ENCODE measurements at regions of chr12 and their contacts with region 1.

Region 1: GRCh38 chr12:55659486-55660385 is 23.0 kb downstream of the OR10P1 start:
- DNase-seq: peak in 2 of 9 experiments; percentile 28 to 45
- ATAC-seq: no peak
- H3K4me3 ChIP-seq: no peak overlapping the region
- H3K4me3 Mint-ChIP-seq: no peak overlapping the region
- H3K27ac ChIP-seq: no peak overlapping the region
- H3K27ac Mint-ChIP-seq: no peak overlapping the region
- H3K4me1 ChIP-seq: no peaks in the 10 kb centered on the region
- H3K4me1 Mint-ChIP-seq: no peaks in the 10 kb centered on the region
- H3K27me3 ChIP-seq: no peaks in the 10 kb centered on the region
- H3K27me3 Mint-ChIP-seq: no peaks in the 10 kb centered on the region
- CTCF ChIP-seq: no peak

Region 2: DNA sequence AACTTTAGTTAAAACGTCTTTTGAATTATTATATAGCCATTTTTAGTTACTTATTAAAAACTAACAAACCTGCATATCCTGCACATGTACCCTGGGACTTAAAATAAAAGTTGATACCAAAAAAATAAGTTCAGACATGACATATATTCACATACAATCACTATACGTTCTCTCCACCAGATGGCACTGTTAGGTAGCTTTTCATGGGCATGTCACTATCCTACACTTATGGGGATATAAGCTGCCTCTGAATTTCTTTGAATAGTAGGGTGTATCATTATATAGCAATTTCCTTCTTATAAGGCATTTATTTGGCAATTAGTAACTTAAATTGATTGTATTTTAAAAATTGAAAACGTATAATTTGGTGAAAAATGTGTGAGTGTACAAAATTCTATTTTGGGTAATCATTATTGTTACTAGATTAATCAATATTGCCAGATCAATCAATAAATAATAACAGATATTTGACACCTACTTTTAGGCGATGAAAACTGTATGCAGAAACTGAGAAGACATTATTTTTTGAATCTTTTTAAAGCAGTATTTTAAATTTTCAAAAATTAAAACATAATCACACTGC is 470.7 kb before region 1 on chr12:
- CTCF ChIA-PET with region 1: interaction called, 12 read pairs
- POLR2A ChIA-PET with region 1: no interaction called
- intact Hi-C with region 1: loop called in 1 of 2 experiments (anchors 1 kb)
- DNase-seq: peak in 5 of 9 experiments; percentile 16 to 79 (median 44)
- ATAC-seq: peak; percentile 73
- H3K4me3 ChIP-seq: no peak overlapping the region
- H3K4me3 Mint-ChIP-seq: no peak overlapping the region
- H3K27ac ChIP-seq: no peak overlapping the region
- H3K27ac Mint-ChIP-seq: no peak overlapping the region
- H3K4me1 ChIP-seq: no peaks in the 10 kb centered on the region
- H3K4me1 Mint-ChIP-seq: no peaks in the 10 kb centered on the region
- H3K27me3 ChIP-seq: peaks cover 3% of the 10 kb centered on the region in 2 experiments
- H3K27me3 Mint-ChIP-seq: peaks cover 35% of the 10 kb centered on the region
- CTCF ChIP-seq: peak; percentile 93

Region 3: DNA sequence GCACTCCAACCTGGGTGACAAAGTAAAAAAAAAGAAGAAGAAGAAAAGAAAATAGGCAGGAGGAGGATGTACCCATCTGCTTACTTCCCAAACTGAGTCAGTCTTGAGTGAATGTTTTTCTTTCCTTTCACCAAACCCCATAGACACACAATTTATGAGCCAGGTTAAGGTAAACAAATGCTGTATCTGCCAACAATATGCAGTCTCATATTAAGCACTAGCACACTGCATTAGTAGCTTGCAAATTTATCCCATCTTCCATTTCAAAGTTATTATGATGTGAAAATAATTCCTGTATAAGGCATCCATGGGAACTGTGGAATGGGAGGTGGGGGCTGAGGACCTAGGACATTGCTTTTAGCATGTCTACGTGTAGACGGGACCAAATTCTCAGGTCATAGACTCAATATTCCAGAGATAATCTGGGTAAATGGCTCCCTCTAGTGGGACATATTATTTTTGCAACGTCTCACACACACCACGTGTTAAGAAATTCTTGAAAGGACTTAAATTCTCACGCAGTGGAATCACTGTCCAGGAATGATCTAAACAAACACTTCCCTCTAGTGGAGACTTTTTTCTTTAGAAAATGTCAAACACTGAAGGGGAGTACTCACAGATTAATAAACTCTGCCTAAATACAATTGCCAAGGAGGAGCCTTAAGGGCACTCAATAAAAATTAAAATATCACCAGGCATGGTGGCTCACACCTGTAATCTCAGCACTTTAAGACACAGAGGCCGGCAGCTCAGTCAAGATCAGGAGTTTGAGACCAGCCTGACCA is 40.2 kb before region 1 on chr12:
- CTCF ChIA-PET with region 1: interaction called, 22 read pairs
- POLR2A ChIA-PET with region 1: no interaction called
- intact Hi-C with region 1: no loop called
- DNase-seq: peak in 6 of 9 experiments; percentile 4 to 83 (median 42)
- ATAC-seq: peak; percentile 96
- H3K4me3 ChIP-seq: no peak overlapping the region
- H3K4me3 Mint-ChIP-seq: no peak overlapping the region
- H3K27ac ChIP-seq: no peak overlapping the region
- H3K27ac Mint-ChIP-seq: no peak overlapping the region
- H3K4me1 ChIP-seq: no peaks in the 10 kb centered on the region
- H3K4me1 Mint-ChIP-seq: peaks cover 2% of the 10 kb centered on the region
- H3K27me3 ChIP-seq: no peaks in the 10 kb centered on the region
- H3K27me3 Mint-ChIP-seq: peaks cover 22% of the 10 kb centered on the region
- CTCF ChIP-seq: peak; percentile 86

Region 4: GRCh38 chr12:55626154-55626553 is 33.6 kb before region 1 on chr12:
- CTCF ChIA-PET with region 1: interaction called, 13 read pairs
- POLR2A ChIA-PET with region 1: no interaction called
- intact Hi-C with region 1: no loop called
- DNase-seq: no peak
- ATAC-seq: no peak
- H3K4me3 ChIP-seq: no peak overlapping the region
- H3K4me3 Mint-ChIP-seq: no peak overlapping the region
- H3K27ac ChIP-seq: no peak overlapping the region
- H3K27ac Mint-ChIP-seq: no peak overlapping the region
- H3K4me1 ChIP-seq: no peaks in the 10 kb centered on the region
- H3K4me1 Mint-ChIP-seq: no peaks in the 10 kb centered on the region
- H3K27me3 ChIP-seq: no peaks in the 10 kb centered on the region
- H3K27me3 Mint-ChIP-seq: peaks cover 5% of the 10 kb centered on the region
- CTCF ChIP-seq: no peak

Region 5: GRCh38 chr12:55637467-55637866 is 22.3 kb before region 1 on chr12:
- CTCF ChIA-PET with region 1: interaction called, 21 read pairs
- POLR2A ChIA-PET with region 1: no interaction called
- intact Hi-C with region 1: no loop called
- DNase-seq: peak in 5 of 9 experiments; percentile 16 to 60 (median 46)
- ATAC-seq: peak; percentile 61
- H3K4me3 ChIP-seq: no peak overlapping the region
- H3K4me3 Mint-ChIP-seq: no peak overlapping the region
- H3K27ac ChIP-seq: no peak overlapping the region
- H3K27ac Mint-ChIP-seq: peak overlapping the region; percentile 38
- H3K4me1 ChIP-seq: peaks cover 3% of the 10 kb centered on the region
- H3K4me1 Mint-ChIP-seq: peaks cover 13% of the 10 kb centered on the region
- H3K27me3 ChIP-seq: no peaks in the 10 kb centered on the region
- H3K27me3 Mint-ChIP-seq: peaks cover 6% of the 10 kb centered on the region
- CTCF ChIP-seq: no peak

Region 6: DNA sequence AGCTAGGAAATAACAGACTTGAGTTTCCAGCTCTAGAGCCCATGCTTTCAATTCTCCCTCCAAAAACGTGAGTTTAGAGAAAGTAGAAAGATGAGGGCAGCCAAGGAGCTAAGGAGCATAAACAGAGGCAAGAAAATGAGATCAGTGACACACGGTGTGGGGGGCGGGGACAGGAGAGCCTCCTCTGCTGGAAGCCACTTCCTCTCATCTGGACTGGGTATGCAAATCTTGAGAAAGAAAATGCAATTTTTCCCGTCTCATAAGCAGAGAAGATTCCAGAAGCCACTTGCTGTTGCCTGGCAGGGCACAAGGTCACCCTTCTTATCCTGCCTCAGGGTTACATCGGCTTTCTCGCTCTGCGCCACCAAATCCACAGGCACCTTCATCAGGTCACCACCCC is 17.1 kb before region 1 on chr12:
- CTCF ChIA-PET with region 1: interaction called, 106 read pairs
- POLR2A ChIA-PET with region 1: interaction called, 6 read pairs
- intact Hi-C with region 1: loop called (anchors 1 kb)
- DNase-seq: peak in 3 of 9 experiments; percentile 20 to 30 (median 21)
- ATAC-seq: no peak
- H3K4me3 ChIP-seq: no peak overlapping the region
- H3K4me3 Mint-ChIP-seq: no peak overlapping the region
- H3K27ac ChIP-seq: no peak overlapping the region
- H3K27ac Mint-ChIP-seq: no peak overlapping the region
- H3K4me1 ChIP-seq: peaks cover 16% of the 10 kb centered on the region
- H3K4me1 Mint-ChIP-seq: peaks cover 22% of the 10 kb centered on the region
- H3K27me3 ChIP-seq: no peaks in the 10 kb centered on the region
- H3K27me3 Mint-ChIP-seq: peaks cover under 1% of the 10 kb centered on the region
- CTCF ChIP-seq: no peak

Region 7: GRCh38 chr12:55673638-55674037 is 13.9 kb after region 1 on chr12:
- CTCF ChIA-PET with region 1: interaction called, 14 read pairs
- POLR2A ChIA-PET with region 1: no interaction called
- intact Hi-C with region 1: no loop called
- DNase-seq: no peak
- ATAC-seq: no peak
- H3K4me3 ChIP-seq: no peak overlapping the region
- H3K4me3 Mint-ChIP-seq: no peak overlapping the region
- H3K27ac ChIP-seq: no peak overlapping the region
- H3K27ac Mint-ChIP-seq: no peak overlapping the region
- H3K4me1 ChIP-seq: no peaks in the 10 kb centered on the region
- H3K4me1 Mint-ChIP-seq: no peaks in the 10 kb centered on the region
- H3K27me3 ChIP-seq: no peaks in the 10 kb centered on the region
- H3K27me3 Mint-ChIP-seq: peaks cover 13% of the 10 kb centered on the region
- CTCF ChIP-seq: no peak

Region 8: DNA sequence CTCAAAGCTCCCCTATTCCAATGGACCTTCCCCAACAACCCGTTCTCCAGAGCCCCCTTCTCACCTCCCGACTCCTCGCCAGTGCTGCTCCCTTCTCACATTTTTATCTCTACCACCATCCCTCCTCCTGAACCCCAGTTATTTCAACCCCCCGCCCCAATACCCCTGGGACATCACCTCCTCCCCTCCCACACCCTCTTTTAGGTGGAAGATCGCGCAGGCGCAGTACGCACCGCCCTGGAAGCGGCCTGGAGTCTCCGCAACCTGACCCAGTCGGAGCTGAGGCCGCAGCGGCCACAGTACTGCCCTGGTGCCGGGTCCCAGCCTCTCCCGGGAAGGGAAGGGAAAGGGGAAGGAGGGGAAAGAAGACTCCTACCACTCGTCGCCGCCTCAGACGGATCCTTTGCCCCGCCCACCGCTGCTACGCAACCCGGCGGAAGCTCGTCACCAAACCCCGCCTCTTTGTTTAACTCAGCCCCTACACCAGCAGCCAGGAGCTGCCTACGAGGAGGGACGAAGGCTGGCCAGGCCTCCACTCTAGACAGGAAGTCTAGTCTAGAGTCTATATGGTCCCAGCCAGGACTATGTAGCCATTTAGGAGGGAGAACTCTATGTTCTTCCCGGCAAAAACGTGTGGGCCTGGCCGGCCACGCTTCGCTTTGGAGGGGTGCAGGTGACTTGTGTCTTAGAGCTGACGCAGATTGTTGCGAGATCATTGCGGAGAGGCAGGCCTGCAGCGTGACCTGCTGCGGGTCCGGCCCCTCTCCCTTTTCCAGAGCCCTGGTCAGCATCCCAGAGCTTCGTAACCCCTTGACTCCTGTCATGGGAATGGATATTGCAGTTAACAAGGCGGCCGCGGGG is 562.0 kb after region 1 on chr12 and contains the start of gene RNF41:
- CTCF ChIA-PET with region 1: no interaction called
- POLR2A ChIA-PET with region 1: no interaction called
- intact Hi-C with region 1: no loop called
- DNase-seq: peak; percentile 85 to 97 (median 93)
- ATAC-seq: peak; percentile 84
- H3K4me3 ChIP-seq: peak within 1 kb of the TSS; percentile 73 to 82
- H3K4me3 Mint-ChIP-seq: peak within 1 kb of the TSS; percentile 95
- H3K27ac ChIP-seq: peak within 1 kb of the TSS; percentile 93 to 99
- H3K27ac Mint-ChIP-seq: peak within 1 kb of the TSS; percentile 99
- H3K4me1 ChIP-seq: peaks cover 29% of the 10 kb centered on the region
- H3K4me1 Mint-ChIP-seq: peaks cover 44% of the 10 kb centered on the region
- H3K27me3 ChIP-seq: no peaks in the 10 kb centered on the region
- H3K27me3 Mint-ChIP-seq: no peaks in the 10 kb centered on the region
- CTCF ChIP-seq: no peak
- total RNA-seq, gene RNF41: 41.0 to 41.6 TPM

Measured in CD8-positive, alpha-beta T cell (primary cell).